Dorsolateral prefrontal cortex (tissue), 120 donors: ENCODE measurements at regions of chr20 and their contacts with region 1.

Region 1: GRCh38 chr20:58209652-58210397 is 18.6 kb downstream of the ANKRD60 start:
- DNase-seq: peak; percentile 79 to 89 (median 82)
- H3K4me3 ChIP-seq: peak overlapping the region in 1 of 59 donors; percentile 15
- H3K27ac ChIP-seq: no peak overlapping the region
- H3K27me3 ChIP-seq: peaks cover 0 to 3% (median 0%) of the 10 kb centered on the region in 45 donors
- CTCF ChIP-seq: peak; percentile 99 to 100 (median 100)

Region 2: DNA sequence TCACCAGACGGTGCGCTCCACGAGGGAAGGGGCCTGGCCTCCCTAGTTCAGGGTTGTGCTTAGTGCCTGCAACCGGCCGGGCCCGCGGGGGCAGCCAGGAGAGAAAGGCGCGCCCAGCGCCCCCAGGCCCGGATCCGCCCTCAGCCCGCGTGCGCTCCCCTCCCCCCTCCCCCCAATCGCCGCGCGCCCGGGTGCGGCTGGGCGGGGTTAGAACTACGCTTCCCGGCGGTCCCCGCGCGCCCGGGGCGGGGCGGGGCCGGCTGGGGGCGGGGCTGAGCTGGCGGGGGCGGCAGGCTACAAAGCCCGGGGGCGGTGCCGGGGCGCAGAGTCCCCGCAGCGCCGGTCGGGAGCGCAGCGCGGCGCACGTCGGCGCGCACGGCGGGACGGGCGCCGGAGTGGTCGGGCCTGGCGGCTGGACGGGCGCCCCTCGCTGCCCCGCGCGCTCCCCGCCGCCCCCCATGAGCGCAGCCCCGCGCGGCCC is 818.7 kb before region 1 on chr20 and contains the start of gene RBM38:
- intact Hi-C with region 1: loop called (anchors 10 kb)
- DNase-seq: peak in 7 of 10 donors; percentile 30 to 84 (median 59)
- H3K4me3 ChIP-seq: peak within 1 kb of the TSS; percentile 38 to 80 (median 65)
- H3K27ac ChIP-seq: peak within 1 kb of the TSS in 48 of 59 donors; percentile 5 to 96 (median 66)
- H3K27me3 ChIP-seq: no peaks in the 10 kb centered on the region
- CTCF ChIP-seq: peak in 1 of 56 donors; percentile 17
- total RNA-seq, gene RBM38: 8.5 to 26.9 (median 13.2) TPM

Region 3: DNA sequence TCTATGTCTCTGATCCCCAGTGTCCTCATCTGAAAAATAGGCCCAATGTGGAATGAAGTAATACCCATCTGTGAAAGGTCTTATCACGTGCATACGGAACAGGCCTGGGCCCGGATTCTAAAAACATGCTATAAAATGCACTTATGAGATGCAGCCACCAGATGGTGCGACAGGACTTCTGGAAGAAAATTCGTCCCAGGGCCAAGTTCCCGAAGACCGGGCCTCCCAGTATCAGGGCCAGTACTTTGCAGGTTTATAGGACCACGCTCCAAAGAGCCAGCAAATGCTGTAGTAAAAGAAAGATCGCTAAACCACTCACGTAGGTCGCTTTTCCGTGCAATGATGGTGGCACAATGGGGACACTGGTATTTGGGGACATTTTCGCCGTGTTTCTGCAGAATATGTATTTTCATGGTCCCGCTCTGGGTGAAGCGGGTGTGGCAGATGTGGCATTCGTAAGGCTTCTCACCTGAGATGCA is 695.5 kb before region 1 on chr20:
- intact Hi-C with region 1: loop called in 1 of 2 experiments (anchors 2 kb)
- DNase-seq: peak; percentile 31 to 77 (median 64)
- H3K4me3 ChIP-seq: no peak overlapping the region
- H3K27ac ChIP-seq: no peak overlapping the region
- H3K27me3 ChIP-seq: peaks cover 0 to 4% (median 0%) of the 10 kb centered on the region in 45 donors
- CTCF ChIP-seq: peak; percentile 70 to 97 (median 88)

Region 4: DNA sequence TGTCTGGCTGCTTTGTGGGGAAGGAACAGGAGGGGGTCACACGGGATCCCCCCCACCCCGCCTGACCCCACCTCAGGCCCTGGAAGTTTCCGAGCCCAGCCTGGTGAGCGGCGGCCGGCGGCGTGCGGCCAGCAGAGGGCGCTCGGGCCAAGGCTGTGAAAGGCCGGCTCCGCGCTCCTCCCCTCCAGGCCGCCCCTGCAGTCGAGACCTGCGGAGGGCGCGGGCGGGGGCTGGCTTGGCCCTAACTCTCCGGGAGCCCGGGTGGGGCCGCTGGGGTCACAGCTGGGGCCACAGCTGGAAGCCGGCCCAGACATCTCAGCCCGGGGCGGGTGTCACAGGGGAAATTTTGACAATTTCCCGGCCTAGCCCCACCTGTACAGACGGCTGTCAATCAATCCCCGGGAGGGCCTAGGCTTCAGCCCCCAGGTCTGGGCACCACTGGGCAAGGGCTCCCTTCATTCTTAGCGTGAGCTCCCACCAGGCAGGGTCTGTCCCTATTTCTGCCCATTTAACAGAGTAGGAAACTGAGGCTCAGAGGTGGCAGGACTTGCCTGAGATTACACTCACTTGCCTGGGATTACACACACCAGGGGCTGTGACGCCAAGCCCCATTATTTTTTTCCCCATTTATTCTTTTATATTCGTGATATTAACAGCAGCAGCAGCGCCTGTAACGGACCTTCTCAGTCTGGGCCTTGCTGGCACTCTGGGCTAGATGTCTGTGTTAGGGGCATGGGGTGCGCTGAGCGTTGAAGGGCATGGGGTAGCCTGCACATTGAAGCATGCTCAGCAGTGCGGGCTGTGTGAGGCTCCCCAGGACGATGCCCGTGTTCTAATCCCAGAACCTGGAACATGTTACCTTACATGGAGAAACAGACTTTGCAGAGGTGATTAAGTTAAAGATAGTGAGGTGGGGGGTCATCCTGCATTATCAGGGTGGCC is 612.6 kb before region 1 on chr20:
- intact Hi-C with region 1: loop called (anchors 1 kb)
- DNase-seq: peak in 9 of 10 donors; percentile 47 to 82 (median 59)
- H3K4me3 ChIP-seq: peak overlapping the region in 29 of 59 donors; percentile 3 to 55 (median 29)
- H3K27ac ChIP-seq: peak overlapping the region in 1 of 59 donors; percentile 9
- H3K27me3 ChIP-seq: peaks cover 0 to 6% (median 0%) of the 10 kb centered on the region in 45 donors
- CTCF ChIP-seq: peak; percentile 86 to 100 (median 96)

Region 5: GRCh38 chr20:57654363-57654997 is 555.3 kb before region 1 on chr20:
- intact Hi-C with region 1: loop called in 1 of 2 experiments (anchors 1 kb)
- DNase-seq: peak; percentile 17 to 78 (median 36)
- H3K4me3 ChIP-seq: no peak overlapping the region
- H3K27ac ChIP-seq: peak overlapping the region in 1 of 59 donors; percentile 18
- H3K27me3 ChIP-seq: no peaks in the 10 kb centered on the region
- CTCF ChIP-seq: peak; percentile 77 to 99 (median 91)